Gastrocnemius medialis (tissue), 4 donors: ENCODE measurements at regions of chr7 and their contacts with region 1.

Region 1: DNA sequence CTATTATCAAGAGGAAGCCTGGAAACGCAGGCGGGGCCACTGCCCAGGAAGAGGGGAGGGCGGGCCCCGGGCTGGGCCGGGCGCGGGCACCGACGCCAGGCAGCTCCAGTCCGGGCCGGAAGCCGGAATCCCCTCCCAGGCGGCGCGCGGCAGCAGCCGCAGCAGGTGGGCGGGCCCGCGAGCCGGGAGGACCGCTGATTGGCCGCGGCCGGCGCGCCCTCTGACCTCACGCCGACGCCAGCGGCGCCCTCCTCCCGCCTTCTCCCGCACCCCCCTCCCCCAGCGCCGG is 438 bp downstream of the BCL7B start:
- DNase-seq: peak; percentile 89 to 92
- ATAC-seq: peak; percentile 76 to 80
- H3K4me3 ChIP-seq: peak overlapping the region; percentile 70 to 93 (median 75)
- H3K27ac ChIP-seq: peak overlapping the region; percentile 92 to 99 (median 98)
- H3K4me1 ChIP-seq: peaks cover 25 to 33% of the 10 kb centered on the region in 2 donors
- H3K27me3 ChIP-seq: no peaks in the 10 kb centered on the region
- CTCF ChIP-seq: no peak
- POLR2A ChIP-seq: no peak

Region 2: DNA sequence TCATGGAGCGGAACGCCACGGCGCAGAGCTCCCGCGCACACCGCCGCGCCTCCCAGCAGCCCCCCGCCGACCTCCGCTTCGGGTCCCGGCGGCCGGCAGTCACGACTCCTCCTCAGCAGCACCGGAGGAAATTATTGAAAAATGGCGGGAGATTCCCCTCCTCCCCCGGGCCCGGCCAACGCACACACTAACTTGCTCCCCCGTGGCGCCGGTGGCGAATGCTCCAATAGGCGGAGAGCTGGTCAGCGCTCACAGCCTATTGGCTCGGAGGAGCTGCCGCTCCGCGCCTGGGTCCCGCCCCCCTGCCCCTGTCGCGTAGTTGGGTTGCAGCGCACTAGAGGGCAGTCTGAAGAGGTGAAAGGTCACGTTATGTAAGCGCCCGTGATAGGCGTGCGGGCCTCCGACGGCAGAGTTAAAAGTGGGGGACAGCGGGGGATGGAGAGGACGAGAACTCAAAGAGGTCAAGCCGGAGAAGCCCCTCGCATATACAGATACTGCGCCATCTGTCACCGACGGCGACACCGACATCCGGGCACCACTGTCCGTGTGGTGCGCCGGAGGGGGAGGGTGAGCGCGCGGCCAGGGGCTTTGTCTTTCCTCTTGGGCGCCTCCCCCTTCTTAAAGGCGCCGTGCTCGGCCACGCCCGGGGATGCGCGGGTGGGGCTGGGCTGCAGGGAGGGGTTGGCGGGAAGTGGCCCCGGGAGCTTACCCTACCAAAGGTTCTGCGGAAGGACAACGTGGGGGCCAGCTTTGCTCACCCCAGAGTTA is 34.8 kb before region 1 on chr7 and contains the start of gene BAZ1B:
- in situ Hi-C with region 1: no loop called
- intact Hi-C with region 1: loop called (anchors 1 kb)
- DNase-seq: peak; percentile 98 to 99
- ATAC-seq: peak; percentile 95 to 96
- H3K4me3 ChIP-seq: peak within 1 kb of the TSS; percentile 70 to 84 (median 80)
- H3K27ac ChIP-seq: peak within 1 kb of the TSS; percentile 88 to 97 (median 94)
- H3K4me1 ChIP-seq: peaks cover 32 to 41% of the 10 kb centered on the region in 2 donors
- H3K27me3 ChIP-seq: no peaks in the 10 kb centered on the region
- CTCF ChIP-seq: peak in 3 of 5 experiments; percentile 19 to 28 (median 25)
- POLR2A ChIP-seq: peak; percentile 83 to 91
- total RNA-seq, gene BAZ1B: 31.2 to 47.0 (median 42.0) TPM

Region 3: GRCh38 chr7:73623798-73624668 is 67.0 kb after region 1 on chr7 and contains the start of gene MLXIPL:
- in situ Hi-C with region 1: no loop called
- intact Hi-C with region 1: loop called (anchors 1 kb)
- DNase-seq: peak; percentile 84 to 89
- ATAC-seq: peak; percentile 68 to 72
- H3K4me3 ChIP-seq: peak within 1 kb of the TSS; percentile 73 to 88 (median 77)
- H3K27ac ChIP-seq: peak within 1 kb of the TSS; percentile 83 to 93 (median 92)
- H3K4me1 ChIP-seq: peaks cover 6 to 8% of the 10 kb centered on the region in 2 donors
- H3K27me3 ChIP-seq: peaks cover 0 to 15% (median 14%) of the 10 kb centered on the region in 3 donors
- CTCF ChIP-seq: no peak
- POLR2A ChIP-seq: peak; percentile 92 to 93
- total RNA-seq, gene MLXIPL: 7.6 to 107 (median 29.2) TPM

Region 4: GRCh38 chr7:73738612-73739374 is 181.7 kb after region 1 on chr7 and contains the start of gene ABHD11:
- in situ Hi-C with region 1: no loop called
- intact Hi-C with region 1: loop called (anchors 5 kb)
- DNase-seq: peak; percentile 96 to 98
- ATAC-seq: peak; percentile 92 to 93
- H3K4me3 ChIP-seq: peak within 1 kb of the TSS; percentile 71 to 98 (median 86)
- H3K27ac ChIP-seq: peak within 1 kb of the TSS; percentile 79 to 88 (median 85)
- H3K4me1 ChIP-seq: peaks cover 0 to 11% of the 10 kb centered on the region in 2 donors
- H3K27me3 ChIP-seq: no peaks in the 10 kb centered on the region
- CTCF ChIP-seq: no peak
- POLR2A ChIP-seq: peak; percentile 51 to 65
- total RNA-seq, gene ABHD11: 3.2 to 9.4 (median 7.6) TPM